ENCODE measurements at regions of chr1 and their contacts with region 1.

Region 1: GRCh38 chr1:40153073-40153770 is 8.0 kb upstream of the RLF start:
- DNase-seq: peak; percentile 48
- H3K4me3 Mint-ChIP-seq: no peak overlapping the region
- H3K27ac Mint-ChIP-seq: no peak overlapping the region
- H3K4me1 Mint-ChIP-seq: peaks cover 7% of the 10 kb centered on the region
- H3K27me3 Mint-ChIP-seq: peaks cover under 1% of the 10 kb centered on the region

Region 2: GRCh38 chr1:39901698-39902459 is 251.3 kb before region 1 on chr1 and contains the start of gene MYCL:
- CTCF ChIA-PET with region 1: no interaction called
- DNase-seq: peak; percentile 85
- H3K4me3 Mint-ChIP-seq: peak within 1 kb of the TSS; percentile 75
- H3K27ac Mint-ChIP-seq: no peak within 1 kb of the TSS
- H3K4me1 Mint-ChIP-seq: peaks cover 6% of the 10 kb centered on the region
- H3K27me3 Mint-ChIP-seq: peaks cover 92% of the 10 kb centered on the region

Region 3: GRCh38 chr1:40183055-40183710 is 30.0 kb after region 1 on chr1:
- CTCF ChIA-PET with region 1: interaction called, 23 read pairs
- DNase-seq: no peak
- H3K4me3 Mint-ChIP-seq: no peak overlapping the region
- H3K27ac Mint-ChIP-seq: no peak overlapping the region
- H3K4me1 Mint-ChIP-seq: peaks cover 49% of the 10 kb centered on the region
- H3K27me3 Mint-ChIP-seq: no peaks in the 10 kb centered on the region

Region 4: DNA sequence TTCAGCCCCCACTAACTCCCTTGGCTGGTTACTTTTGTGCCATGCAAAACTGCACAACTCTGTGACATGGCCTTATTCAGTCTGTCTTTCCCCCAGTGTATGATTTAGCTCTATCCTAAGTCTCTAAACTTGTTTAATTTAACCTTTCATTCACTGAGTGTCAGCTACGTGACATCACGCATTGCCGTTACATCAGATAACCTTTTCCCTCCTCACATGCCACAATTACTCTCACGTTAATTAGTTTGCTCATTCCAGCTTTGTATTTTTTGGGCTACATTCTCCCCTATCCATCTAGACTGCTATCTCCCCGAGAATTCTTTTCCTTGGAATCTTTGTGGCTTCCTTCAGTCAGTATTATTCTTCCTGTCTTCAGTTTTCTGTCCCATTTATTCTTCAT is 65.1 kb after region 1 on chr1:
- CTCF ChIA-PET with region 1: no interaction called
- DNase-seq: no peak
- H3K4me3 Mint-ChIP-seq: no peak overlapping the region
- H3K27ac Mint-ChIP-seq: no peak overlapping the region
- H3K4me1 Mint-ChIP-seq: peaks cover 10% of the 10 kb centered on the region
- H3K27me3 Mint-ChIP-seq: no peaks in the 10 kb centered on the region

Region 5: GRCh38 chr1:40299366-40300248 is 146.4 kb after region 1 on chr1:
- CTCF ChIA-PET with region 1: interaction called, 19 read pairs
- DNase-seq: no peak
- H3K4me3 Mint-ChIP-seq: no peak overlapping the region
- H3K27ac Mint-ChIP-seq: no peak overlapping the region
- H3K4me1 Mint-ChIP-seq: no peaks in the 10 kb centered on the region
- H3K27me3 Mint-ChIP-seq: no peaks in the 10 kb centered on the region

Region 6: GRCh38 chr1:40305457-40305856 is 152.2 kb after region 1 on chr1:
- CTCF ChIA-PET with region 1: interaction called, 19 read pairs
- DNase-seq: peak; percentile 40
- H3K4me3 Mint-ChIP-seq: no peak overlapping the region
- H3K27ac Mint-ChIP-seq: no peak overlapping the region
- H3K4me1 Mint-ChIP-seq: no peaks in the 10 kb centered on the region
- H3K27me3 Mint-ChIP-seq: no peaks in the 10 kb centered on the region

Region 7: DNA sequence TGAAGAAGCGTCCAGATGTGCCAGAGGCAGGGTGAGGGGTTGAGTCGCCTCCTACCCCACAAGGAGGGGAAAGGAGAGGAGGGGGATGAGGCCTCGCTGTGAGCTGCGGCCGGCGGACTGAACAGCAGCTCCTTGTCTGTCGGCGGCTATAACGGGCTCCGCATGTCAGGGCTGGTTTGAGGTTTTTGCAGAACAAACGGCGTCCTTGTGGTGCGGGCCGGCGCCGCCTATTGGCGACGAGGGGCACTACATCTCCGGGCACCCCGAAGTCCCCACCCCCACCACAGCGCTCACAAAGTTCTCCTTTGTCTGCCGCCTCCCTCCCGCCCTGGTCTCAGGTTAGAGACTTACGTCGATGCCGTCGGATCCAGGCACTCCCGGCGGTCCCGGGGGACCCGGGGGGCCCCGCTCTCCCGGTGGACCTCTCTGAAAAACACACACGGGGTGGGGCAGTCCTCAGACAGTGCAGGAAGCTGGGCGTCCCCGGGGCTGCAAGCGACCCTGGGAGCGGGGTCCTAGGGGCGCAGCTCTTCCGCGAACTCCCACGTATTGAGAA is 162.1 kb after region 1 on chr1:
- CTCF ChIA-PET with region 1: interaction called, 73 read pairs
- DNase-seq: peak; percentile 86
- H3K4me3 Mint-ChIP-seq: peak overlapping the region; percentile 61
- H3K27ac Mint-ChIP-seq: peak overlapping the region; percentile 28
- H3K4me1 Mint-ChIP-seq: peaks cover 54% of the 10 kb centered on the region
- H3K27me3 Mint-ChIP-seq: peaks cover 72% of the 10 kb centered on the region